Activated naive CD8-positive, alpha-beta T cell treated with anti-CD3 and anti-CD28 coated beads, Interleukin-2, amount 10 ng/mL, durations not matched to agents 7 days and 5 days (primary cell): ENCODE measurements at regions of chr19 and their contacts with region 1.

Region 1: GRCh38 chr19:6737284-6738046 is at the start of gene GPR108:
- DNase-seq: peak; percentile 99
- ATAC-seq: peak; percentile 78
- H3K4me3 Mint-ChIP-seq: peak within 1 kb of the TSS; percentile 98
- H3K27ac Mint-ChIP-seq: peak within 1 kb of the TSS; percentile 100
- H3K4me1 Mint-ChIP-seq: peaks cover 26% of the 10 kb centered on the region
- H3K27me3 Mint-ChIP-seq: no peaks in the 10 kb centered on the region
- total RNA-seq, gene GPR108: 82.8 to 91.7 TPM

Region 2: GRCh38 chr19:6639439-6639838 is 98.0 kb before region 1 on chr19:
- POLR2A ChIA-PET with region 1: interaction called, 18 read pairs
- DNase-seq: no peak
- ATAC-seq: peak; percentile 59
- H3K4me3 Mint-ChIP-seq: peak overlapping the region; percentile 43
- H3K27ac Mint-ChIP-seq: peak overlapping the region; percentile 90
- H3K4me1 Mint-ChIP-seq: peaks cover 40% of the 10 kb centered on the region
- H3K27me3 Mint-ChIP-seq: no peaks in the 10 kb centered on the region

Region 3: DNA sequence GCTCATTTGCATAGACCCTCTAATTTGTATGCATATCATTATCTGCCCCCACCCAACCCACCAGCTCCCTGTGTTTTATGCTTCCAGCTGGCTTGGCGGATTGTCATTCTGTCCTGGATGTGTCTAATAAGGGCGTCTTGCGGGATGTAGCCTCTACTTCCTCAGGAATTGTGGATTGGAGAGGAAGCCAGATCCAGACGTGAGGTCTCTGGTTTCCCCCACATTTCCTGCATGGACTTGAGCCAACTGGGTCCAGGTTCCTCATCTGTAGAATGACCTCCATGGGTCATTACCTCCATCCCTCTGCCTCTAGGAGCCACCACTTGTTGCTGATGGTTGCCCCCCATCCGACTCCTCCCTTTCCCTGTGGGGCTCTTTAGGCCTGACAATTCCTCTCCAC is 74.8 kb before region 1 on chr19:
- POLR2A ChIA-PET with region 1: interaction called, 12 read pairs
- DNase-seq: no peak
- ATAC-seq: no peak
- H3K4me3 Mint-ChIP-seq: no peak overlapping the region
- H3K27ac Mint-ChIP-seq: no peak overlapping the region
- H3K4me1 Mint-ChIP-seq: peaks cover 33% of the 10 kb centered on the region
- H3K27me3 Mint-ChIP-seq: no peaks in the 10 kb centered on the region

Region 4: GRCh38 chr19:6767357-6768235 is 30.1 kb after region 1 on chr19 and contains the start of gene SH2D3A:
- POLR2A ChIA-PET with region 1: interaction called, 17 read pairs
- DNase-seq: peak; percentile 95
- ATAC-seq: peak; percentile 73
- H3K4me3 Mint-ChIP-seq: peak within 1 kb of the TSS; percentile 92
- H3K27ac Mint-ChIP-seq: peak within 1 kb of the TSS; percentile 93
- H3K4me1 Mint-ChIP-seq: peaks cover 42% of the 10 kb centered on the region
- H3K27me3 Mint-ChIP-seq: no peaks in the 10 kb centered on the region
- total RNA-seq, gene SH2D3A: 35.5 to 35.7 TPM

Region 5: GRCh38 chr19:6862673-6863078 is 125.2 kb after region 1 on chr19:
- POLR2A ChIA-PET with region 1: interaction called, 23 read pairs
- DNase-seq: peak; percentile 88
- ATAC-seq: peak; percentile 84
- H3K4me3 Mint-ChIP-seq: peak overlapping the region; percentile 82
- H3K27ac Mint-ChIP-seq: peak overlapping the region; percentile 78
- H3K4me1 Mint-ChIP-seq: peaks cover 17% of the 10 kb centered on the region
- H3K27me3 Mint-ChIP-seq: no peaks in the 10 kb centered on the region